AG04450 (cell line): ENCODE measurements at regions of chr7 and their contacts with region 1.

Region 1: DNA sequence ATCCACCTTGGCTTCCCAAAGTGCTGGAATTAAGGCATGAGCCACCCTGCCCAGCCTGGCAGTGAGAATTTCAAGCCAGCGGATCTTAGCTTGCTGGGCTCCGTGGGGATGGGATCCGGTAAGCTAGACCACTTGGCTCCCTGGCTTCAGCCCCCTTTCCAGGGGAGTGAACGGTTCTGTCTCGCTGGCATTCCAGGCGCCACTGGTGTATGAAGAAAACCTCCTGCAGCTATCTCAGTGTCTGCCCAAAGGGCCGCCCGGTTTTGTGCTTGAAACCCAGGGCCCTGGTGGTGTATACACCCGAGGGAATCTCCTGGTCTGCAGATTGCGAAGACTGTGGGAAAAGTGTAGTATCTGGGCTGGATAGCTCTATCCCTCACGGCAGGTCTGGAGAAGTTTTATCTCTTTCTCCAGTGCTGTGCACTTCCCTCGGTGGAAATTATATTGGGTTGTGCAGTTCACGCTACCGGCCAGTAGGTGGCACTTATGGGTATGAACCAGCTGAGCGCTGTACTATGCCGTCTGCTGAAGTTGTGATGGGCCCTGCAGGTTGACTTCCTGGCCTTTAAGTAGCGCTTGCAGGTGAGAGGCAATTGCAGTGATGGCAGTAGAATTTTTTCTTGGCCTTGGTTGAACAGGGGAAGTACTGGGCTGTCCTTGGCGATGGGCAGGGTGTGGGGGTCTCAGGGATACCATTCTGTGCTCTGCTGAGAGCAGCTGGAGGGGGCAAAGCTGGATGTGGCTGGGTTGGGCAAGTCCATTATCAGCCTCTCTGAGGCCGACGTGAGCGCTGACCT is 138.0 kb upstream of the MTPN start:
- DNase-seq: peak; percentile 20
- H3K4me3 ChIP-seq: no peak overlapping the region
- H3K27ac ChIP-seq: no peak overlapping the region
- H3K27me3 ChIP-seq: no peaks in the 10 kb centered on the region
- CTCF ChIP-seq: peak; percentile 79

Region 2: GRCh38 chr7:134891262-134891695 is 1223.9 kb before region 1 on chr7:
- CTCF ChIA-PET with region 1: no interaction called
- POLR2A ChIA-PET with region 1: no interaction called
- DNase-seq: peak; percentile 69
- H3K4me3 ChIP-seq: peak overlapping the region; percentile 63
- H3K27ac ChIP-seq: peak overlapping the region; percentile 90
- H3K27me3 ChIP-seq: no peaks in the 10 kb centered on the region
- CTCF ChIP-seq: no peak

Region 3: GRCh38 chr7:136139417-136139816 is 24.3 kb after region 1 on chr7:
- CTCF ChIA-PET with region 1: interaction called, 10 read pairs
- POLR2A ChIA-PET with region 1: no interaction called
- DNase-seq: no peak
- H3K4me3 ChIP-seq: no peak overlapping the region
- H3K27ac ChIP-seq: no peak overlapping the region
- H3K27me3 ChIP-seq: no peaks in the 10 kb centered on the region
- CTCF ChIP-seq: no peak

Region 4: GRCh38 chr7:136214356-136214755 is 99.2 kb after region 1 on chr7:
- CTCF ChIA-PET with region 1: no interaction called
- POLR2A ChIA-PET with region 1: no interaction called
- DNase-seq: no peak
- H3K4me3 ChIP-seq: no peak overlapping the region
- H3K27ac ChIP-seq: no peak overlapping the region
- H3K27me3 ChIP-seq: no peaks in the 10 kb centered on the region
- CTCF ChIP-seq: peak; percentile 30; the same call in 1 of the 2 replicates